H1 (cell line): ENCODE measurements at regions of chr17 and their contacts with region 1.

Region 1: DNA sequence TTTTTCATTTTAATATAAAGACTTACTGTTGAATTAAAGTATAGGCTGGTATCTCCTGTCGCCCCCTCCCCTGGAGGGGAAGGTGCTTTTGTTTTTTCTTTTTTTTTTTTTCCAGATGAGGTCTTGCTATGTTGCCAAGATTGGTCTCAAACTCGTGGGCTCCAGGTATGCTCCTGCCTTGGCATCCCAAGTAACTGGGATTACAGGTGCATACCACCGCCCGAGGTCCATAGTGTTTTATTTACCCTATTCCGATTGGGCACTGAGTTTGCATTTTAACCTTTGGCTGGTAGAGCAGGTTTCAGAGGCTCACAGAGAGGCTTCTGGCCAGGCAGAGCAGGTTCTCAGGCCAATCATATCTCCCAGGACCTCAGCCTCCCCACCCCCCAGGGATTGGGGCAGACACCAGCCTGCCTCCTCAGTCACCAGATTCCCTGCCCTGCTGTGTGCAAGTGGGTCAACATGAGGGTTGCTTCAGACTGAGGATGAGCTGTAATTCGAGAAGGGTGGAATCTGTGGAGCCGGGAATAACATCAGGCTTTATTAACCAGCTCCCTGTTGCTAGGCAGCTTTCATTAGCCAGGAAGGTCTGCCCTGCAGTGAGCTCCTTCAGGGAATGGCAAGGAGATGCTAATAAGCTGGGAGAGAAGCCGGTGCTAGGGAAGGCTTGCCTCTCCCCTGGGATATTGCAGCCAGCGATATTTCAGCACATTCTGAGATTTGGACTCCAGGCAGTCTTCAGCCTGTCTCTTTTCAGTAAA is 10.4 kb downstream of the SGSM2 start:
- DNase-seq: peak; percentile 83 to 89
- H3K4me3 ChIP-seq: peak overlapping the region in 3 of 4 experiments; percentile 22 to 48 (median 37); a peak in 5 of 8 replicates
- H3K27ac ChIP-seq: peak overlapping the region; percentile 89
- H3K4me1 ChIP-seq: peaks cover 4 to 21% (median 7%) of the 10 kb centered on the region in 4 experiments
- H3K27me3 ChIP-seq: no peaks in the 10 kb centered on the region
- CTCF ChIP-seq: no peak
- EP300 ChIP-seq: peak in 1 of 2 experiments; percentile 74; a peak in 1 of 3 replicates
- POLR2A ChIP-seq: peak; percentile 70 to 72
- RAD21 ChIP-seq: no peak

Region 2: DNA sequence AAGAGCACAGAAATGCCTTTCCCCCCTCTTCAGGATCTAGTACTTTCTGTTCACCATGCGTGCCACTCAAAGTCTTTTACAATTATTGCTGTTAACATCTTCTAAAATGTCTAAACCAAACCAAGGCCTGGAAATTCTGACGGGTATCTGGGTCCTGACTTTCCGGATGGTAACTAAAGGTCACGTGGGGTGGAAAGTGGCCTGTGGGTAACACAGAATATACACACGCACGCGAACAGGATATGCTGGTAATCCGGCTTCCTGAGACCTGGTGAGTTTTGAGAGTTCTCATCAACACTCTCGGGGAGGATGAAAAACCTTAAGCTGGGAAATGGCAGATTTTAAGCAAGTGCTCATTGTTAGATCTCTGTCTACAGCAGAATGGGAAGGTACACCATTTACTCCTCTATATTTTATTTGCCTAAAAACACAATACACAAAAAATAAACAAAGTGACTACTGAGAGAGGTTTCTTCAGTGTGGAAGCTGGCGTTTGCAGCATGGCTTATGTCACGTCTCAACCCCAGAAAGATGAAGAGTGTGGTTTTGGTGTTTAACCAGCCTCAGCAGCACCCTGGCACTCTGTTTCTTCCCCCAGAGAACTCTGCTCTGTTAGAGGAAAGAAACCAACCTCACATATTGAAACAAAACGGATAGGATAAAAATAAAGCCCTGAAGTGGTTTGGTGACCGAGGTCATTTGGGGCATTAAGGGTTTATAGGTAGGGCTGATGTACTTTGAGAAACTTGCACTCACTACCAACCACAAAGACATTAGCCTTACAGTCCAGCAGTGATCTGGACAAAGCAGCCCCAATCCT is 81.5 kb before region 1 on chr17:
- CTCF ChIA-PET with region 1: no interaction called
- POLR2A ChIA-PET with region 1: no interaction called
- DNase-seq: no peak
- H3K4me3 ChIP-seq: no peak overlapping the region
- H3K27ac ChIP-seq: no peak overlapping the region
- H3K4me1 ChIP-seq: no peaks in the 10 kb centered on the region
- H3K27me3 ChIP-seq: no peaks in the 10 kb centered on the region
- CTCF ChIP-seq: no peak
- EP300 ChIP-seq: no peak
- POLR2A ChIP-seq: no peak
- RAD21 ChIP-seq: no peak

Region 3: GRCh38 chr17:2331303-2331702 is 16.4 kb before region 1 on chr17:
- CTCF ChIA-PET with region 1: interaction called, 69 read pairs
- POLR2A ChIA-PET with region 1: interaction called, 148 read pairs
- DNase-seq: no peak
- H3K4me3 ChIP-seq: no peak overlapping the region
- H3K27ac ChIP-seq: no peak overlapping the region
- H3K4me1 ChIP-seq: peaks cover 3 to 18% (median 9%) of the 10 kb centered on the region in 4 experiments; a peak in 6 of 7 replicates
- H3K27me3 ChIP-seq: no peaks in the 10 kb centered on the region
- CTCF ChIP-seq: no peak
- EP300 ChIP-seq: no peak
- POLR2A ChIP-seq: peak; percentile 35 to 49
- RAD21 ChIP-seq: no peak

Region 4: GRCh38 chr17:2363851-2364762 is 16.4 kb after region 1 on chr17:
- CTCF ChIA-PET with region 1: interaction called, 55 read pairs
- POLR2A ChIA-PET with region 1: interaction called, 13 read pairs
- DNase-seq: no peak
- H3K4me3 ChIP-seq: no peak overlapping the region
- H3K27ac ChIP-seq: no peak overlapping the region
- H3K4me1 ChIP-seq: peaks cover 0 to 2% (median 0%) of the 10 kb centered on the region in 4 experiments; a peak in 3 of 7 replicates
- H3K27me3 ChIP-seq: no peaks in the 10 kb centered on the region
- CTCF ChIP-seq: no peak
- EP300 ChIP-seq: no peak
- POLR2A ChIP-seq: no peak
- RAD21 ChIP-seq: no peak

Region 5: GRCh38 chr17:2369551-2370210 is 22.0 kb after region 1 on chr17:
- CTCF ChIA-PET with region 1: interaction called, 55 read pairs
- POLR2A ChIA-PET with region 1: interaction called, 9 read pairs
- DNase-seq: peak in 1 of 2 experiments; percentile 77
- H3K4me3 ChIP-seq: no peak overlapping the region
- H3K27ac ChIP-seq: no peak overlapping the region
- H3K4me1 ChIP-seq: peaks cover 0 to 12% (median 5%) of the 10 kb centered on the region in 4 experiments; a peak in 3 of 7 replicates
- H3K27me3 ChIP-seq: no peaks in the 10 kb centered on the region
- CTCF ChIP-seq: peak; percentile 45 to 54 (median 48)
- EP300 ChIP-seq: no peak
- POLR2A ChIP-seq: no peak
- RAD21 ChIP-seq: peak; percentile 53 to 64

Region 6: GRCh38 chr17:2904152-2904551 is 556.4 kb after region 1 on chr17:
- CTCF ChIA-PET with region 1: no interaction called
- POLR2A ChIA-PET with region 1: no interaction called
- DNase-seq: no peak
- H3K4me3 ChIP-seq: no peak overlapping the region
- H3K27ac ChIP-seq: peak overlapping the region; percentile 35; the same call in 1 of the 2 replicates
- H3K4me1 ChIP-seq: peaks cover 0 to 16% (median 10%) of the 10 kb centered on the region in 4 experiments; a peak in 6 of 7 replicates
- H3K27me3 ChIP-seq: no peaks in the 10 kb centered on the region
- CTCF ChIP-seq: no peak
- EP300 ChIP-seq: no peak
- POLR2A ChIP-seq: no peak
- RAD21 ChIP-seq: no peak